Mammary epithelial cell (primary cell): ENCODE measurements at regions of chr7 and their contacts with region 1.

Region 1: GRCh38 chr7:129825496-129826267 is 127.1 kb downstream of the UBE2H start:
- DNase-seq: peak; percentile 73
- H3K4me3 ChIP-seq: peak overlapping the region; percentile 70 to 84 (median 70)
- H3K27ac ChIP-seq: peak overlapping the region; percentile 62
- H3K4me1 ChIP-seq: peaks cover 27% of the 10 kb centered on the region
- H3K27me3 ChIP-seq: no peaks in the 10 kb centered on the region
- CTCF ChIP-seq: peak in 1 of 2 donors; percentile 66

Region 2: GRCh38 chr7:129224251-129225205 is 601.2 kb before region 1 on chr7 and contains the start of gene AHCYL2:
- CTCF ChIA-PET with region 1: no interaction called
- dilution Hi-C with region 1: no loop called
- in situ Hi-C with region 1: loop called in 1 of 2 experiments (anchors 25 kb)
- intact Hi-C with region 1: loop called (anchors 5 kb)
- DNase-seq: peak; percentile 98
- H3K4me3 ChIP-seq: peak within 1 kb of the TSS; percentile 75 to 82 (median 78)
- H3K27ac ChIP-seq: peak within 1 kb of the TSS; percentile 77
- H3K4me1 ChIP-seq: peaks cover 15% of the 10 kb centered on the region
- H3K27me3 ChIP-seq: no peaks in the 10 kb centered on the region
- CTCF ChIP-seq: no peak
- total RNA-seq, gene AHCYL2: 19.3 to 26.6 TPM

Region 3: GRCh38 chr7:129652914-129653313 is 172.8 kb before region 1 on chr7:
- CTCF ChIA-PET with region 1: interaction called, 4 read pairs
- dilution Hi-C with region 1: no loop called
- in situ Hi-C with region 1: loop called in 1 of 2 experiments (anchors 5 kb)
- intact Hi-C with region 1: no loop called
- DNase-seq: no peak
- H3K4me3 ChIP-seq: no peak overlapping the region
- H3K27ac ChIP-seq: no peak overlapping the region
- H3K4me1 ChIP-seq: peaks cover 13% of the 10 kb centered on the region
- H3K27me3 ChIP-seq: no peaks in the 10 kb centered on the region
- CTCF ChIP-seq: no peak

Region 4: GRCh38 chr7:129780257-129780973 is 45.3 kb before region 1 on chr7:
- CTCF ChIA-PET with region 1: interaction called, 20 read pairs
- dilution Hi-C with region 1: no loop called
- in situ Hi-C with region 1: no loop called
- intact Hi-C with region 1: loop called (anchors 1 kb)
- DNase-seq: peak; percentile 90
- H3K4me3 ChIP-seq: peak overlapping the region; percentile 45 to 97 (median 70)
- H3K27ac ChIP-seq: peak overlapping the region; percentile 33
- H3K4me1 ChIP-seq: peaks cover 8% of the 10 kb centered on the region
- H3K27me3 ChIP-seq: peaks cover 33% of the 10 kb centered on the region
- CTCF ChIP-seq: no peak

Region 5: GRCh38 chr7:129840757-129841156 is 15.1 kb after region 1 on chr7:
- CTCF ChIA-PET with region 1: no interaction called
- dilution Hi-C with region 1: no loop called
- in situ Hi-C with region 1: no loop called
- intact Hi-C with region 1: no loop called
- DNase-seq: no peak
- H3K4me3 ChIP-seq: no peak overlapping the region
- H3K27ac ChIP-seq: no peak overlapping the region
- H3K4me1 ChIP-seq: peaks cover 43% of the 10 kb centered on the region
- H3K27me3 ChIP-seq: no peaks in the 10 kb centered on the region
- CTCF ChIP-seq: no peak

Region 6: GRCh38 chr7:130758429-130759056 is 932.9 kb after region 1 on chr7:
- CTCF ChIA-PET with region 1: no interaction called
- dilution Hi-C with region 1: no loop called
- in situ Hi-C with region 1: no loop called
- intact Hi-C with region 1: loop called (anchors 10 kb)
- DNase-seq: peak; percentile 11
- H3K4me3 ChIP-seq: no peak overlapping the region
- H3K27ac ChIP-seq: no peak overlapping the region
- H3K4me1 ChIP-seq: no peaks in the 10 kb centered on the region
- H3K27me3 ChIP-seq: peaks cover 1% of the 10 kb centered on the region
- CTCF ChIP-seq: peak; percentile 57 to 65